Panc1 (cell line): ENCODE measurements at regions of chr17 and their contacts with region 1.

Region 1: GRCh38 chr17:48024937-48025906 is 12.4 kb downstream of the COPZ2 start:
- DNase-seq: peak; percentile 82
- ATAC-seq: peak; percentile 88
- H3K4me3 ChIP-seq: peak overlapping the region; percentile 61 to 93
- H3K27ac ChIP-seq: peak overlapping the region; percentile 76
- H3K4me1 ChIP-seq: peaks cover 27% of the 10 kb centered on the region
- H3K27me3 ChIP-seq: no peaks in the 10 kb centered on the region
- CTCF ChIP-seq: peak; percentile 94

Region 2: GRCh38 chr17:47895856-47896671 is 129.2 kb before region 1 on chr17 and contains the start of gene SP2:
- CTCF ChIA-PET with region 1: no interaction called
- POLR2A ChIA-PET with region 1: interaction called, 10 read pairs
- in situ Hi-C with region 1: no loop called
- intact Hi-C with region 1: no loop called
- DNase-seq: peak; percentile 100
- ATAC-seq: peak; percentile 96
- H3K4me3 ChIP-seq: peak within 1 kb of the TSS; percentile 88 to 98
- H3K27ac ChIP-seq: peak within 1 kb of the TSS; percentile 98
- H3K4me1 ChIP-seq: peaks cover 9% of the 10 kb centered on the region; the same call in 1 of the 2 replicates
- H3K27me3 ChIP-seq: no peaks in the 10 kb centered on the region
- CTCF ChIP-seq: no peak
- total RNA-seq, gene SP2: 25.6 TPM

Region 3: GRCh38 chr17:48074315-48075081 is 49.3 kb after region 1 on chr17:
- CTCF ChIA-PET with region 1: no interaction called
- POLR2A ChIA-PET with region 1: interaction called, 3 read pairs
- in situ Hi-C with region 1: no loop called
- intact Hi-C with region 1: loop called (anchors 1 kb)
- DNase-seq: peak; percentile 53
- ATAC-seq: peak; percentile 82
- H3K4me3 ChIP-seq: no peak overlapping the region
- H3K27ac ChIP-seq: peak overlapping the region; percentile 32; the same call in 1 of the 2 replicates
- H3K4me1 ChIP-seq: peaks cover 5% of the 10 kb centered on the region; the same call in 1 of the 2 replicates
- H3K27me3 ChIP-seq: no peaks in the 10 kb centered on the region
- CTCF ChIP-seq: peak; percentile 85

Region 4: GRCh38 chr17:48131216-48131824 is 106.1 kb after region 1 on chr17:
- CTCF ChIA-PET with region 1: interaction called, 10 read pairs
- POLR2A ChIA-PET with region 1: interaction called, 5 read pairs
- in situ Hi-C with region 1: no loop called
- intact Hi-C with region 1: loop called (anchors 2 kb)
- DNase-seq: peak; percentile 53
- ATAC-seq: peak; percentile 92
- H3K4me3 ChIP-seq: no peak overlapping the region
- H3K27ac ChIP-seq: no peak overlapping the region
- H3K4me1 ChIP-seq: peaks cover 13% of the 10 kb centered on the region
- H3K27me3 ChIP-seq: no peaks in the 10 kb centered on the region
- CTCF ChIP-seq: peak; percentile 89

Region 5: GRCh38 chr17:48618256-48618897 is 593.2 kb after region 1 on chr17:
- CTCF ChIA-PET with region 1: interaction called, 4 read pairs
- POLR2A ChIA-PET with region 1: no interaction called
- in situ Hi-C with region 1: no loop called
- intact Hi-C with region 1: loop called (anchors 10 kb)
- DNase-seq: no peak
- ATAC-seq: peak; percentile 60
- H3K4me3 ChIP-seq: peak overlapping the region; percentile 68 to 71
- H3K27ac ChIP-seq: peak overlapping the region; percentile 99
- H3K4me1 ChIP-seq: peaks cover 63% of the 10 kb centered on the region
- H3K27me3 ChIP-seq: no peaks in the 10 kb centered on the region
- CTCF ChIP-seq: peak; percentile 100